Lower leg skin (tissue), 4 donors: ENCODE measurements at regions of chr2 and their contacts with region 1.

Region 1: GRCh38 chr2:156790343-156791037 is 354.3 kb downstream of the GPD2 start:
- DNase-seq: no peak
- H3K4me3 ChIP-seq: no peak overlapping the region
- CTCF ChIP-seq: no peak
- POLR2A ChIP-seq: no peak

Region 2: GRCh38 chr2:156492979-156493378 is 297.5 kb before region 1 on chr2:
- intact Hi-C with region 1: no loop called
- DNase-seq: no peak
- H3K4me3 ChIP-seq: no peak overlapping the region
- CTCF ChIP-seq: no peak
- POLR2A ChIP-seq: no peak

Region 3: GRCh38 chr2:156763174-156763573 is 27.3 kb before region 1 on chr2:
- intact Hi-C with region 1: loop called (anchors 1 kb)
- DNase-seq: no peak
- H3K4me3 ChIP-seq: no peak overlapping the region
- CTCF ChIP-seq: no peak
- POLR2A ChIP-seq: no peak